HCT116 (cell line): ENCODE measurements at regions of chr11 and their contacts with region 1.

Region 1: DNA sequence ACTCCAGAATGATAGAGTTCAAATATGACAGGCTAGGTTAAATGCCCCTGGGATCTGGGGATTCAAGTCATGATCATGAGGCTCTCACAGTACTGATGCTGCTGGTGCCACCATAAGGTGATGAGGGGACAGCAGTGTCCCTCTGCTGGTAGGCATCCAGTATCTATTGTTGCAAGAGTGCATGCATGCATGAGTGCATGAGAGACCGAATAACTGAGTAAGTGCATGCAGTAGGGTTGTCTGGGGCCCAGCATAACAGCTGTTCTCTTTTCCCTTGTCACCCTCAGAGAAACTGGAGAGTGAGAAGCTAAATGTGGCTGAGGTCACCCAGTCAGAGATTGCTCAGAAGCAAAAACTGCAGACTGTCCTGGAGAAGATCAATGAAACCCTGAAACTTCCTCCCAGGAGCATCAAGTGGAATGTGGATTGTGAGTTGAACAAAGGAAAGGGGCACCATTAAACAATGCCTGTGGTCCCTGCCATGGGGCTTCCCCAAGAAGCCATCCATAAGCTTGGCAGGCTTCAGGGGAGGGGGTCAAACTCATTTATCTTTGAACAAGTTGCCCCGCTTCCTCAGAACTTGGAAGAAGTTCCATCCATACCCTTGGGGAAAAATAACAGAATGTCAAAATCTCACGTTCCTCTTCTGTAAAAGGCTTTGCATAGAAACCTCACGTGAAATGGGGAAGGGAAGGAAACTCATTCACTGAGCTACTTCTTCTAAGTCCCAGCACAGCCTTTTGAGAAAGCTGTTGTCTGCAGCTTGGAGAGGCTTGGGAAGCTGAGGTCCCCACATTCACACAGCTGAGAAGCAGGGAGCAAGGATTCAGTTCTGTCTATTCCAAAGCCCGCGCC is 119.0 kb downstream of the PARVA start:
- DNase-seq: peak; percentile 18
- ATAC-seq: peak; percentile 94
- H3K4me3 ChIP-seq: no peak overlapping the region
- H3K27ac ChIP-seq: no peak overlapping the region
- H3K4me1 ChIP-seq: no peaks in the 10 kb centered on the region
- H3K27me3 ChIP-seq: no peaks in the 10 kb centered on the region
- CTCF ChIP-seq: peak; percentile 50 to 64 (median 60); a peak in 5 of 6 replicates
- POLR2A ChIP-seq: no peak
- RAD21 ChIP-seq: peak; percentile 41; the same call in 1 of the 2 replicates

Region 2: GRCh38 chr11:11463405-11463804 is 1033.0 kb before region 1 on chr11:
- CTCF ChIA-PET with region 1: no interaction called
- POLR2A ChIA-PET with region 1: no interaction called
- RAD21 ChIA-PET with region 1: no interaction called
- intact Hi-C with region 1: no loop called
- DNase-seq: no peak
- ATAC-seq: no peak
- H3K4me3 ChIP-seq: no peak overlapping the region
- H3K27ac ChIP-seq: no peak overlapping the region
- H3K4me1 ChIP-seq: no peaks in the 10 kb centered on the region
- H3K27me3 ChIP-seq: no peaks in the 10 kb centered on the region
- CTCF ChIP-seq: no peak
- POLR2A ChIP-seq: no peak
- RAD21 ChIP-seq: no peak

Region 3: DNA sequence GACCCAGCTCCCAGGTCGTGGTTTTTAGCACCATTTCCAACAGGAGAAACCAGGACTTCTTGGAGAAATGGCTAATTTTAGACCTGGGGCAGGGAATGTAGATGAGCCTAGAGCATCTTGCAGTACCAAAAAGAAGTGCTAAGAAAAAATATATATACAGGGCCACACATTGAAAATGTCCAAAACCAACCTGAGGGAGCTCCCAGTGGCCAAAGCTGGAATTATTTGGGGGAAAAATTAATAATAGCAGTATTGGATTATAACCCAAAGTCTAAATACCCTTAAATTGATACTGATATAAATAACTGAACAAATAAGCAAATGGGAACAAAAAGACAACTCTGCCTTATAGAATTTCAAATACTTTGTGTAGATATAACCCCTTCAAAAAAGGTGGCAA is 11.1 kb before region 1 on chr11:
- CTCF ChIA-PET with region 1: interaction called, 11 read pairs
- POLR2A ChIA-PET with region 1: no interaction called
- RAD21 ChIA-PET with region 1: no interaction called
- intact Hi-C with region 1: no loop called
- DNase-seq: no peak
- ATAC-seq: peak; percentile 49
- H3K4me3 ChIP-seq: no peak overlapping the region
- H3K27ac ChIP-seq: no peak overlapping the region
- H3K4me1 ChIP-seq: no peaks in the 10 kb centered on the region
- H3K27me3 ChIP-seq: no peaks in the 10 kb centered on the region
- CTCF ChIP-seq: peak in 2 of 3 experiments; percentile 34 to 51; a peak in 4 of 6 replicates
- POLR2A ChIP-seq: no peak
- RAD21 ChIP-seq: peak; percentile 43

Region 4: DNA sequence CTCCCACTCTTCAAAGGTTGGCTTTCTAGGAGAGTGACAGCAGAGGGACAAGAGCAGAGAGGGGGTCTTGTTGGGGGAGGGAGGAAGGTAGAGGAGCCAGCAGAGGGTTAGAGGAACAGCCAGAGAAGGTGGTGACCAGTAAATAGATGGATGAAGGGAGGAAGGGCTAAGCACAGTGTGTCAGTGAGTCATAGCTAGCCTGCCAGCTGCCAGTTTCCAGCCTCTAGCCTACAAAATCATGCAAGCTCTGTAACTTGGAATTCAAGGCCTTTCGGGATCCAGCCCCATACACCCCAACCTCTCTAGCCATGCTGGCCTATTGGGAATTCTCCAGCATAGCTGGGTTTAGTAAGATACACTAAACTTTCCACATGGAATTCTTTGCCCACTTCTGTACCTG is 30.4 kb after region 1 on chr11:
- CTCF ChIA-PET with region 1: no interaction called
- POLR2A ChIA-PET with region 1: no interaction called
- RAD21 ChIA-PET with region 1: no interaction called
- intact Hi-C with region 1: no loop called
- DNase-seq: no peak
- ATAC-seq: no peak
- H3K4me3 ChIP-seq: no peak overlapping the region
- H3K27ac ChIP-seq: no peak overlapping the region
- H3K4me1 ChIP-seq: 0 out of 4 replicates have a peak, but pooled peaks cover 0 to 4% of the 10 kb centered on the region in 2 experiments
- H3K27me3 ChIP-seq: no peaks in the 10 kb centered on the region
- CTCF ChIP-seq: no peak
- POLR2A ChIP-seq: no peak
- RAD21 ChIP-seq: no peak